B cell (primary cell): ENCODE measurements at regions of chr2 and their contacts with region 1.

Region 1: GRCh38 chr2:171399292-171399691 is 34.5 kb downstream of the METTL8 start:
- DNase-seq: no peak
- ATAC-seq: no peak
- H3K4me3 ChIP-seq: no peak overlapping the region
- H3K4me3 Mint-ChIP-seq: no peak overlapping the region
- H3K27ac ChIP-seq: peak overlapping the region in 1 of 2 donors; percentile 44
- H3K27ac Mint-ChIP-seq: no peak overlapping the region
- H3K4me1 ChIP-seq: peaks cover 6 to 7% of the 10 kb centered on the region in 2 donors
- H3K4me1 Mint-ChIP-seq: peaks cover 13% of the 10 kb centered on the region
- H3K27me3 ChIP-seq: no peaks in the 10 kb centered on the region
- H3K27me3 Mint-ChIP-seq: no peaks in the 10 kb centered on the region
- CTCF ChIP-seq: no peak

Region 2: GRCh38 chr2:171360905-171361304 is 38.4 kb before region 1 on chr2:
- CTCF ChIA-PET with region 1: no interaction called
- POLR2A ChIA-PET with region 1: no interaction called
- intact Hi-C with region 1: loop called (anchors 5 kb)
- DNase-seq: no peak
- ATAC-seq: no peak
- H3K4me3 ChIP-seq: no peak overlapping the region
- H3K4me3 Mint-ChIP-seq: no peak overlapping the region
- H3K27ac ChIP-seq: no peak overlapping the region
- H3K27ac Mint-ChIP-seq: no peak overlapping the region
- H3K4me1 ChIP-seq: no peaks in the 10 kb centered on the region
- H3K4me1 Mint-ChIP-seq: no peaks in the 10 kb centered on the region
- H3K27me3 ChIP-seq: no peaks in the 10 kb centered on the region
- H3K27me3 Mint-ChIP-seq: no peaks in the 10 kb centered on the region
- CTCF ChIP-seq: no peak

Region 3: GRCh38 chr2:171864357-171864985 is 465.2 kb after region 1 on chr2:
- CTCF ChIA-PET with region 1: no interaction called
- POLR2A ChIA-PET with region 1: no interaction called
- intact Hi-C with region 1: no loop called
- DNase-seq: no peak
- ATAC-seq: no peak
- H3K4me3 ChIP-seq: no peak overlapping the region
- H3K4me3 Mint-ChIP-seq: no peak overlapping the region
- H3K27ac ChIP-seq: no peak overlapping the region
- H3K27ac Mint-ChIP-seq: no peak overlapping the region
- H3K4me1 ChIP-seq: no peaks in the 10 kb centered on the region
- H3K4me1 Mint-ChIP-seq: no peaks in the 10 kb centered on the region
- H3K27me3 ChIP-seq: no peaks in the 10 kb centered on the region
- H3K27me3 Mint-ChIP-seq: no peaks in the 10 kb centered on the region
- CTCF ChIP-seq: no peak